ENCODE measurements at regions of chr5 and their contacts with region 1.

Region 1: DNA sequence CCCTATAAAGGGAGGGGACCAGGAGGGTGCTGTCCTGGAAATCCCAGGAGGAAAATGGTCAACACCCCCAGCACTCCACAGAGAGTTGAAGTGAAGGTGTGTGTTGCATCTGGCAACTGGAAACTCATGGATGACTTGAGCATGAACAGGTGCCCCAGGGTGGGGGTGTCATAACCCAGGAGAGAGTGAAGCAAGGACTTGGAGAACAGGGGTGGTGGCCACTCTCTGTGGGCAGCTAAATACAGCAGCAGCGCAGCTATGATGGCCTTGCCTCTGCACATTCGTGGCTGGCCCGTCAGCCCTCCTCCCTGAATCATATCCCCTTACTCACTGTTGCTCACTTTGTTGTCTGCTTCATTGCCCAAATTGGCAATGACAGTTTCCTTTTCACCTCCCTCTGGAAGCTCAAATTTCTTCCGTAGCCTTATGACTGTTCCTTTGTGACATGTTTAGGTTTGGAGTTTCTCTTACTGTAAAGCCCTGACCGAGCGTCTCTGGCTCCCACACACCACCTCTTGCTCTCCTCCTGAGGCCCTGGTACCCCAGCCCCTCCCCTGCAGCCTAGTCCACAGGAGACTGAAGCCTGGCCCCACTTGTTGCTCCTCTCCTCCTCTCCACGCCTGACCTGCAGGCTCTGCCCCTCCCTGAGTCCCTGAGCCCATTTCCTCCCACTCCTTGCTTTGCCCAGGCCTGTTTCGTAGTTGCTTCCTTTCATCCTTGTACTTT is 185.8 kb downstream of the CD180 start:
- DNase-seq: peak; percentile 61
- ATAC-seq: peak; percentile 16
- H3K4me3 Mint-ChIP-seq: no peak overlapping the region
- H3K27ac Mint-ChIP-seq: peak overlapping the region; percentile 71
- H3K4me1 Mint-ChIP-seq: peaks cover 95% of the 10 kb centered on the region
- H3K27me3 Mint-ChIP-seq: no peaks in the 10 kb centered on the region

Region 2: DNA sequence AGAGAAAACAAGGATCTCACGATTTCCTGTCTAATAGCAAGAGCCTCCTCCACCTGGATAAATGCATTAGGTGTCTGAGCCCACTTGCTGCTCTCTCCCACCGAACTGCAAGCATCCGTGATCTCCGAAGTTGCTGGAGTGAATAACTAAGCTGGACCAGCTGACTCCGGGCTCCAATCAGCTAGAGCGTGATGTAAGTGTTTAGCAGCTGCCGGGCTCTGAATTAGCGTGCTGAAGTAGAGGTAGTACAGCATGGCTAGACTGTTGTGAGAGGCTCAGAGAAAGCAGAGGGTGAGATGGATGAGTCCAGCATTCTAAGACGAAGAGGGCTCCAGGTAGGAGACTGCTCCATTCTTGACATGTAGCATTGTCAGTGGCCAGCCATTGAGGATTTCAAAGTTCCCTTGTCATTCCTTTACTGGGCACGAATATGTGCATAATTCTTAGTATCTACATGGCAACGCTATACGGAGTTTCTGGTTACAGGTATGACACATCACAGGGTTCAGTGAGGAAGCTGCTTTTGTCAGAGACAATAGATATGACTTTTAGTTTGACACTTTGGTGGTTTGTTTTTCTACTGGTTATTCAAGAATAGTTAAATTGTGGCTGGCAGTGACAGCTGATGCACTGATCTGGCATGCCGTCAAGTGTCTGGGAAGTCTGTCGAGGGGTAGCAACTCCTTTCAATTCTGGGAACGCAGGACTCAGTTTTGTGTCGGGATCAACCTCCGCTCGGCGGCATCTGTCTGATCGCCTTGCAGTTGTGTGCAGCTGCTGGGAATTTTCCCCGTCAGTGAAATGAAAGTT is 182.1 kb before region 1 on chr5:
- CTCF ChIA-PET with region 1: interaction called, 3 read pairs
- POLR2A ChIA-PET with region 1: no interaction called
- intact Hi-C with region 1: loop called in 1 of 2 experiments (anchors 5 kb)
- DNase-seq: peak; percentile 82
- ATAC-seq: peak; percentile 93
- H3K4me3 Mint-ChIP-seq: peak overlapping the region; percentile 82
- H3K27ac Mint-ChIP-seq: peak overlapping the region; percentile 83
- H3K4me1 Mint-ChIP-seq: peaks cover 25% of the 10 kb centered on the region
- H3K27me3 Mint-ChIP-seq: peaks cover 27% of the 10 kb centered on the region

Region 3: DNA sequence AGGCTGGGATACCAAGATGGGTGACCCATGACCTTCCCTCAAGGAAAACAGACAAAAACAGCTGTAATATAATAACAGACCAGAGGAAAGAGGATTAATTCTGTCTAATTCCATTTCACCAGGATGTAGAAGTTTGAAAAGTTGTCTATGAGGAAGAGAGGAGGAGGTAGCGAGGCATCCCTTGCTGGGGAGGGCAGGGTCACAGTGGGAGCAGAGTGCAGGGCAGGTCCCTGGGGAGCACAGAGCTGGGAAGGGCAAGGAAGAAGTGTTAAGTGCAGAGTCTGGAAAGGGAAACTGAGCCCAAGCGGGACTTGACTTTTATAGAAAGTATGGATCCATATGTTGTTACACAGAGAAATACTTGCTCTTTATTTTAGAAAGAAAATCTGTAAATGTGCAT is 24.8 kb before region 1 on chr5:
- CTCF ChIA-PET with region 1: no interaction called
- POLR2A ChIA-PET with region 1: no interaction called
- intact Hi-C with region 1: no loop called
- DNase-seq: no peak
- ATAC-seq: no peak
- H3K4me3 Mint-ChIP-seq: no peak overlapping the region
- H3K27ac Mint-ChIP-seq: no peak overlapping the region
- H3K4me1 Mint-ChIP-seq: peaks cover 2% of the 10 kb centered on the region
- H3K27me3 Mint-ChIP-seq: no peaks in the 10 kb centered on the region

Region 4: GRCh38 chr5:67021521-67021920 is 10.7 kb after region 1 on chr5:
- CTCF ChIA-PET with region 1: interaction called, 10 read pairs
- POLR2A ChIA-PET with region 1: no interaction called
- intact Hi-C with region 1: loop called in 1 of 2 experiments (anchors 1 kb)
- DNase-seq: no peak
- ATAC-seq: peak; percentile 97
- H3K4me3 Mint-ChIP-seq: no peak overlapping the region
- H3K27ac Mint-ChIP-seq: no peak overlapping the region
- H3K4me1 Mint-ChIP-seq: peaks cover 55% of the 10 kb centered on the region
- H3K27me3 Mint-ChIP-seq: no peaks in the 10 kb centered on the region

Region 5: GRCh38 chr5:67032921-67033664 is 22.2 kb after region 1 on chr5:
- CTCF ChIA-PET with region 1: interaction called, 10 read pairs
- POLR2A ChIA-PET with region 1: interaction called, 4 read pairs
- intact Hi-C with region 1: loop called (anchors 1 to 2 kb)
- DNase-seq: no peak
- ATAC-seq: no peak
- H3K4me3 Mint-ChIP-seq: no peak overlapping the region
- H3K27ac Mint-ChIP-seq: peak overlapping the region; percentile 47
- H3K4me1 Mint-ChIP-seq: peaks cover 75% of the 10 kb centered on the region
- H3K27me3 Mint-ChIP-seq: no peaks in the 10 kb centered on the region

Region 6: DNA sequence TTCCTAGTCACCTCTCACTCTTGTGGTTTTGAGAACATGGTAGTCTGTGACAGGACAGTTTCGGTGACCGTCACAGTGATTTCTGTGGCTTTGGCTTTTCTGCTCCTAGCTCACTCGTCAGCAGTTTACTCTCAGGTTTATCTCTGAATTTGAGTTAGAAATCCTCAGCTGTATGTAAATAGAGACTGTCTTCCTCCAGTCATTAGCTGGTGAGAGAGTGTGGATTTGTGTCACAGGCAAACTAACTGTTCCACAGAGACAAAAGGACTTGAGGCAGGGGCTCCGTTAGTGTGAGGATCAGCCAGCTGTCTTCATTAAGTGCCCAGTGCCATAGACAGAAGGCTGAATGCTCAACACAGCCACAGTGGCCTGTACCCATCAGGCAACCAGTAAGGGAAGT is 54.4 kb after region 1 on chr5:
- CTCF ChIA-PET with region 1: interaction called, 3 read pairs
- POLR2A ChIA-PET with region 1: interaction called, 3 read pairs
- intact Hi-C with region 1: loop called in 1 of 2 experiments (anchors 2 kb)
- DNase-seq: peak; percentile 64
- ATAC-seq: peak; percentile 73
- H3K4me3 Mint-ChIP-seq: no peak overlapping the region
- H3K27ac Mint-ChIP-seq: peak overlapping the region; percentile 59
- H3K4me1 Mint-ChIP-seq: peaks cover 26% of the 10 kb centered on the region
- H3K27me3 Mint-ChIP-seq: no peaks in the 10 kb centered on the region